ENCODE measurements at regions of chr15 and their contacts with region 1.

Region 1: GRCh38 chr15:41957021-41957897 is 15.1 kb downstream of the EHD4 start:
- DNase-seq: peak; percentile 85
- H3K4me3 ChIP-seq: peak overlapping the region in 1 of 3 experiments; percentile 16
- H3K27ac ChIP-seq: peak overlapping the region; percentile 98
- H3K4me1 ChIP-seq: peaks cover 66% of the 10 kb centered on the region
- H3K27me3 ChIP-seq: no peaks in the 10 kb centered on the region
- CTCF ChIP-seq: no peak
- POLR2A ChIP-seq: no peak

Region 2: DNA sequence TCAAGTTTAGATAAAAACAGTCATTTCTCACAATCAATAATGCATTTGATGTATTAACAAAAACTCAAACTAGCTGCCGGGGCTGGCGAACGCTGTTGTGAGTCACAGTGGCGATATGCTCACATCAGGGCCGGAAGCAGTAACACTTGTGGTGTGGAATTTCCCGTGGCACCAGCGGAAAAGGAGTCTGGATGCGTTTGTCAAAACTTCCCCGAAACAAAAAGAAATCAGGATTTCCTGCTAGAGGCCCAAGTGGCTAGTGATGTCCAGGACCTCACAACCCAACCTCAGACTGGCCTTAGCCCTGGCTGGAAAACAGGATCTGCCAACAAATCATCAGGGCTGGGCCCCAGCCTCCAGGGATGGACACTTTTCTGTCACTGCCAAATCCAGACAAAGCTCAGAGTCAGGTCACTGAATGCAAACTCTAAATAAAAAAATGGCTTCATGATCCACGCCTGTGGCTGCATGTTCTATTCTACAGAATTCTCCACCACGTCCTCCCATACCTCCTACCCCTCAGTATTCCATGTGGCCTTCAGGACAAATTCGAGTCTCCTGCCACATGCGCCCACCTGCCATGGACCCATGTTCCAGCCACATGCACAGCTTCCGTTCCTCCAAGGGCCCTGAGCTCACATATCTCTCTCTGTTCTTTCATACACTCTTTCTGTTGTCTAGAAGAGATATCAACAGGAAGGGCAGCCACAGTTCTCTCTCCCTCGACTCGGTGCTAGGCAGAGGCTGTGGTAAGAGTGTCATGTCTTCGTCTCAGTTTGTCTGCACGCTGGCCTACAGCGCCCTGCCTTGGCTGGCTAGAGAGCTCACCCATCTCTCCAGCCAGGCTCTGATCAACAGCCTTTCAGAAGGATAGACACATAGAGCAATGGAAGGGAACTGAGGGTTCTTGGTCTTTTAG is 20.4 kb before region 1 on chr15:
- CTCF ChIA-PET with region 1: interaction called, 7 read pairs
- POLR2A ChIA-PET with region 1: interaction called, 9 read pairs
- dilution Hi-C with region 1: no loop called
- intact Hi-C with region 1: loop called (anchors 1 kb)
- DNase-seq: peak; percentile 97
- H3K4me3 ChIP-seq: no peak overlapping the region
- H3K27ac ChIP-seq: peak overlapping the region; percentile 99
- H3K4me1 ChIP-seq: peaks cover 96% of the 10 kb centered on the region
- H3K27me3 ChIP-seq: no peaks in the 10 kb centered on the region
- CTCF ChIP-seq: no peak
- POLR2A ChIP-seq: peak; percentile 85

Region 3: DNA sequence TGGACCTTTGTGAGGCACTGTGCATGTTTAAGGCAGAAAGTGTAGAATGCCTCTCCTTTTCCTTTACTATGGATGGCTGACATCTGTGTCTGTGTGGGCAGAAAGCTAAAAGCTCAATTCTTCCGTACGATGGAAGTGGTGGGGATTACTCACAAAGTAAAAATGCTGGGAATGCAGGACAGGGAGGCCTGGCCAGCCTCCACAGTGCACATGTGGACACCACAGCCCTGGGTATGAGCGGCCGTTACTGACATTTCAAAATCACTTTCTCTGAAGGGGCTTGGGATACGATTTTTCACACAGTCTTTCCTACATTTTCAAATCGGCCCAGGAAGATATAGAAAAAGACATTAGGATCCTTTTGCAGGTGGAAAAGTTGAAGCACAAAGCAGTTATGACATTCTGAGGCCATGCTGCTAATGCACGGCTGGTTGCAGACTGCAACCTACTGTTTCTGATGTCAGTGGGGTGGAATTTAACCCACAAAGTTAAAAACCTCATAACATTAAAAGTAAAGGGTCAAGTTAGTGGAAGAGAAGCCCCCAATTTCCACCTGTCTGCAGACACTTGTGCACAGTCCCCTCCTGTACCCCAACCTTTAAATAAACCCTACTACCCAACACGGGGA is 12.8 kb before region 1 on chr15:
- CTCF ChIA-PET with region 1: interaction called, 6 read pairs
- POLR2A ChIA-PET with region 1: interaction called, 9 read pairs
- dilution Hi-C with region 1: no loop called
- intact Hi-C with region 1: loop called (anchors 1 kb)
- DNase-seq: peak; percentile 82
- H3K4me3 ChIP-seq: no peak overlapping the region
- H3K27ac ChIP-seq: peak overlapping the region; percentile 99
- H3K4me1 ChIP-seq: peaks cover 91% of the 10 kb centered on the region
- H3K27me3 ChIP-seq: no peaks in the 10 kb centered on the region
- CTCF ChIP-seq: no peak
- POLR2A ChIP-seq: peak; percentile 20

Region 4: GRCh38 chr15:42084460-42085235 is 127.4 kb after region 1 on chr15:
- CTCF ChIA-PET with region 1: no interaction called
- POLR2A ChIA-PET with region 1: no interaction called
- dilution Hi-C with region 1: no loop called
- intact Hi-C with region 1: no loop called
- DNase-seq: peak; percentile 64
- H3K4me3 ChIP-seq: no peak overlapping the region
- H3K27ac ChIP-seq: no peak overlapping the region
- H3K4me1 ChIP-seq: no peaks in the 10 kb centered on the region
- H3K27me3 ChIP-seq: peaks cover 3 to 7% of the 10 kb centered on the region in 2 experiments
- CTCF ChIP-seq: peak; percentile 88 to 94
- POLR2A ChIP-seq: no peak

Measured in endothelial cell of umbilical vein (primary cell).